ENCODE measurements at regions of chr1 and their contacts with region 1.

Region 1: DNA sequence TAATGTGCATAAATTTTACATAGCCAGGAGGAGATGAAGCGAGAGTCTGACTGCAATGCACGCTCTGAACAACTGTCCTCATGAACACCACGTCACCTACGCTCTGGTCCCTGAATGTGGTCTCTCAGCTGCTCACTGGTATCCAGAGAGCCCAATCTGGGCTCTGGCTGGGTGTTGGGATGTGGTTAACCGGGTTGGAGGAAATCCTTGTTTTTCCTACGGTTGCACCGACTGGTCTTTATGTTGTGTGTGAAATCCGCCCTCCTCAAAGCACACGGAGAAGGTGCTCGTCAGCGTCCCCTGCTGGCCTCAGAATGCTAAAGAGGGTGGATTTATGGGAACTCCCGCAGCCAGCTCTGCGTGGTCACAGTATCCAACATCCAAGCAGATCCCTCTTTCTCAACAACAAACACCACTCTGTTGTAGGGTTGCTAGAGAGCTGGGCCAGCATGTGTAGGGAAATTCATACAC is 51.8 kb upstream of the FAM89A start:
- DNase-seq: peak; percentile 69
- ATAC-seq: peak; percentile 93
- H3K4me3 Mint-ChIP-seq: no peak overlapping the region
- H3K27ac Mint-ChIP-seq: no peak overlapping the region
- H3K4me1 Mint-ChIP-seq: no peaks in the 10 kb centered on the region
- H3K27me3 Mint-ChIP-seq: peaks cover 68% of the 10 kb centered on the region
- CTCF ChIP-seq: peak; percentile 76

Region 2: GRCh38 chr1:230899841-230900251 is 192.0 kb before region 1 on chr1:
- CTCF ChIA-PET with region 1: no interaction called
- POLR2A ChIA-PET with region 1: no interaction called
- DNase-seq: no peak
- ATAC-seq: no peak
- H3K4me3 Mint-ChIP-seq: no peak overlapping the region
- H3K27ac Mint-ChIP-seq: no peak overlapping the region
- H3K4me1 Mint-ChIP-seq: no peaks in the 10 kb centered on the region
- H3K27me3 Mint-ChIP-seq: no peaks in the 10 kb centered on the region
- CTCF ChIP-seq: no peak

Region 3: DNA sequence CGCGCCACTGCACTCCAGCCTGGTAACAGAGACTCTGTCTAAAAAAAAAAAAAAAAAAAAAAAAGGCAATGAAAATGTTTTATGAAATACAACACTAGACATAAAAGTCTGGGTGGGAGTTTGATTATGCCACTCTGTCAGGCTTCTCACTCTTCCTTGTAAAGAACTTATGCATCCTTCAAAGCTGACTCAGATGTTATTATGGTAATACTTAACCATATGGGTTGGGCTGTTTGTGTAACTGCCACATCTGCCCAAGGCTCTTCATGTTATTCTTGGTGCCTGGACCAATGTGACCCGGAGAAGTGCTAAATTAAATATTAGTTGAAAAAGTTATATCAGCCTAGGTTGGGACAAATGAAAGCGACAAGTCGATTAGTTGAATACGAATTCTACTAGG is 75.6 kb before region 1 on chr1:
- CTCF ChIA-PET with region 1: interaction called, 15 read pairs
- POLR2A ChIA-PET with region 1: no interaction called
- DNase-seq: no peak
- ATAC-seq: no peak
- H3K4me3 Mint-ChIP-seq: no peak overlapping the region
- H3K27ac Mint-ChIP-seq: no peak overlapping the region
- H3K4me1 Mint-ChIP-seq: peaks cover 19% of the 10 kb centered on the region
- H3K27me3 Mint-ChIP-seq: peaks cover 59% of the 10 kb centered on the region
- CTCF ChIP-seq: no peak

Region 4: GRCh38 chr1:231116738-231117137 is 24.9 kb after region 1 on chr1:
- CTCF ChIA-PET with region 1: no interaction called
- POLR2A ChIA-PET with region 1: no interaction called
- DNase-seq: no peak
- ATAC-seq: no peak
- H3K4me3 Mint-ChIP-seq: no peak overlapping the region
- H3K27ac Mint-ChIP-seq: no peak overlapping the region
- H3K4me1 Mint-ChIP-seq: 0 out of 2 replicates have a peak, but pooled peaks cover 2% of the 10 kb centered on the region
- H3K27me3 Mint-ChIP-seq: peaks cover 55% of the 10 kb centered on the region
- CTCF ChIP-seq: no peak

Measured in WTC11 (cell line).